ENCODE measurements at regions of chr14 and their contacts with region 1.

Region 1: GRCh38 chr14:65824285-65824977 is 411.9 kb downstream of the FUT8 start:
- DNase-seq: peak; percentile 29 to 82 (median 42)
- ATAC-seq: peak; percentile 97
- H3K4me3 ChIP-seq: no peak overlapping the region
- H3K4me3 Mint-ChIP-seq: no peak overlapping the region
- H3K27ac ChIP-seq: no peak overlapping the region
- H3K27ac Mint-ChIP-seq: no peak overlapping the region
- H3K4me1 ChIP-seq: peaks cover 3% of the 10 kb centered on the region
- H3K4me1 Mint-ChIP-seq: peaks cover 13% of the 10 kb centered on the region
- H3K27me3 ChIP-seq: no peaks in the 10 kb centered on the region
- H3K27me3 Mint-ChIP-seq: no peaks in the 10 kb centered on the region
- CTCF ChIP-seq: peak; percentile 93

Region 2: DNA sequence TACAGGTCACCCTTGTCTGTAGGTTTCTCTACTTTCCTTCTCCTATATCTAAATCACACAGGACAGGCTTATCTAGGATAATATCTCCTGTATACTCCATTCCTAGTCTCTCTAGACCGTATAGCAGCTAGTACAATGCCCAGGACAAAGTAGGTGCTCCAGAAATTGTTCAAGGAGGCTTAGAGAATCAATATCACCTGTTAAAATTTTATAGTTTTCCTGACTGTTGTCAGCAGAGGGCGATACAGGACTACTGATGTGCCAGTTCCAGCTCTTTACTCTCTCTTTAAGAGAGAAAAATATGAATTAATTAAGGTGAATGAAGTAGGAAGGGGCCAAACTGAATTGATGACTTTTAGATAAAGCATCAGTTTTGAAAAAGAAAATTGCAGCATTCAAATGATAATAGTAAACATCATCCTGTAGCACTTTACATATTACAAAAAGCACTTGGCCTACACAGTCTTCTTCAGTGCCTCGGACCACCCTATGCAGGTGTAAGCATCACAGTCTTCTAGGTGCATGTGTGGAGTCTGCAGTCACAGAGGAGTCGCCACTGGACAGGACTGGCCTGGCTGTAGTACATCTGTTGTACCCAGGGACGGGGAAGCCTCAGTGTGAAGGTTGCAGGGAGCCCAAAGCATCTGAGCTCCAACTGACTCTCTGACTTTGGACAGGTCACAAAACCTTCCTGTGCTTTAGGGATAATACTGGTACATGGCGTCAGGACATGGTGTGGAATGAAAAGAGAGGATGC is 660.2 kb before region 1 on chr14:
- CTCF ChIA-PET with region 1: interaction called, 17 read pairs
- POLR2A ChIA-PET with region 1: no interaction called
- intact Hi-C with region 1: loop called (anchors 2 kb)
- DNase-seq: peak in 13 of 14 experiments; percentile 4 to 79 (median 21)
- ATAC-seq: peak; percentile 54
- H3K4me3 ChIP-seq: no peak overlapping the region
- H3K4me3 Mint-ChIP-seq: no peak overlapping the region
- H3K27ac ChIP-seq: no peak overlapping the region
- H3K27ac Mint-ChIP-seq: no peak overlapping the region
- H3K4me1 ChIP-seq: no peaks in the 10 kb centered on the region
- H3K4me1 Mint-ChIP-seq: peaks cover 5% of the 10 kb centered on the region
- H3K27me3 ChIP-seq: no peaks in the 10 kb centered on the region
- H3K27me3 Mint-ChIP-seq: no peaks in the 10 kb centered on the region
- CTCF ChIP-seq: peak; percentile 93

Region 3: DNA sequence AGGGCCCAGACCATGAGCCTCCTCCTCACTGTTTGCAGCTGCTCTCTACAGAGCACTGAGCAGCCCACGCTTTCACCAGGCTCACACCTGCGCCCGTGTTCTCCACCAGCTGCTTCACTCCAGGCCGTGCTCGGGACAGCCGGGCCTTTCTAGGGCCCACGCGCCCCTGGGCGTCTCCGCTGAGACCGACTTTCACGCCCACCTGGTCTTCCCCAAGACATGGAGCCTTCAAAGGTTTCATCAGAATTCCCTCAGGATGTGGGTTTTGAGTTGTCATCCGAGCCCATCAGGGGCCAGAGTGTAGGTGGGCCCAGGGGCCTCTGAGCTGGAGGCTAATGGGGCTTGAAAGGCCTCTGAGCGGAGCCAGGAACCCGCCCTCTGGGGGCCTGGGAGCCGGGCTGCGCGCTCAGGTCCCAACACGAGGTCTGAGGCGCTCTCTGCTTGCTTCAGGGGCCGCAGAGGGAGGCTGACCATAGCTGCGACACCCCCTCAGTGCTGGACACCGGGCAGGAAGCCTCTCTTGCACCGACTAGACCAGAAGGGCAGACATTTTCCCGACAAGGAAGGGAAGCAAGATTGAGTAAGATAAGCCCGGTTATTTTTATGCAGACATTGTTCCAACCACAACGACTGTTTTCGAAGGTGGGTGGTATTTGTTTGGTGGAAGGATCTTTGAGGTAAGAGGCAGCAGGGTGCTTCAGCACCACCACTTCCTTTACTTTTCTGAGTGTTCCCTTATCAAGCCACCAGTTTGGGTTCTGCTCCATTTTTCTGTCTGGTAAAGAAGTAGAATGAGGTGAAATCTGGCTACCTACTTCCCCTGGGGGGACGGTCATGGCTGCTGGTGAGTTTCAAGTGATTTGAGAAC is 536.9 kb before region 1 on chr14:
- CTCF ChIA-PET with region 1: no interaction called
- POLR2A ChIA-PET with region 1: no interaction called
- intact Hi-C with region 1: loop called in 1 of 2 experiments (anchors 10 kb)
- DNase-seq: peak; percentile 21 to 83 (median 34)
- ATAC-seq: peak; percentile 86
- H3K4me3 ChIP-seq: peak overlapping the region; percentile 24
- H3K4me3 Mint-ChIP-seq: peak overlapping the region; percentile 85
- H3K27ac ChIP-seq: peak overlapping the region; percentile 72 to 73
- H3K27ac Mint-ChIP-seq: peak overlapping the region; percentile 95
- H3K4me1 ChIP-seq: peaks cover 68% of the 10 kb centered on the region
- H3K4me1 Mint-ChIP-seq: peaks cover 70% of the 10 kb centered on the region
- H3K27me3 ChIP-seq: no peaks in the 10 kb centered on the region
- H3K27me3 Mint-ChIP-seq: no peaks in the 10 kb centered on the region
- CTCF ChIP-seq: no peak

Region 4: GRCh38 chr14:65810322-65810721 is 14.1 kb before region 1 on chr14:
- CTCF ChIA-PET with region 1: interaction called, 15 read pairs
- POLR2A ChIA-PET with region 1: no interaction called
- intact Hi-C with region 1: no loop called
- DNase-seq: no peak
- ATAC-seq: no peak
- H3K4me3 ChIP-seq: no peak overlapping the region
- H3K4me3 Mint-ChIP-seq: no peak overlapping the region
- H3K27ac ChIP-seq: no peak overlapping the region
- H3K27ac Mint-ChIP-seq: no peak overlapping the region
- H3K4me1 ChIP-seq: no peaks in the 10 kb centered on the region
- H3K4me1 Mint-ChIP-seq: peaks cover 5% of the 10 kb centered on the region
- H3K27me3 ChIP-seq: no peaks in the 10 kb centered on the region
- H3K27me3 Mint-ChIP-seq: no peaks in the 10 kb centered on the region
- CTCF ChIP-seq: no peak

Region 5: DNA sequence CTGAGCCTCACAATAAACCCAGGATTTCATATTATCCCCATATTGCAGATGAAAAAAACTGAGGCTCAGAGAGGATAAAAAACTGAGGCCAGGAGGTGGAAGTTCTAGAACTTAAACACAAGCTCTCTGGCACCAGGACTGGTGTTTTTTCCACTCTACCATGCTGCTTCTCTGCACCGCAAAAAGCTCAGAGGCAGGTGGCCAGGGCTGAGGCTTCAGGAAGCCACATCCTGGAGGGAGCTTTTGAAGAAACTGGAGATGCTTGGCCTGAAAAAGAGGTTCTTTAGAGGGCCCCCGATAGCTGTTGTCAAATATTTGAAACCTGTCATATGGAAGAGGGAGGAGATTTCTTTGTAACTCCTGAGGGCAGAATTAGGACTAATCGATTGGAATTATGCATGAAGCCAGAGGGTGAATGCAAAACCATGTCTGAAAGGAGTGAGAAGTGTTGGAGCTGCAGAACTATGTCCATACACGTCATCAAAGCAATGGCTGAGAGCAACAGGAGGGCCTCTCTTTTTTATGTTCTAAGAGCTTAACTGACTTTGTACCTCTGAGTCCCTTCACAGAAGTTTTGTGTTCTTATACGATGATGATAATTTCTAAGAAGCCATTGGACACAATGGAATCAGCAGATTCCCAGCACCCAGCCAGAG is 36.7 kb after region 1 on chr14:
- CTCF ChIA-PET with region 1: interaction called, 11 read pairs
- POLR2A ChIA-PET with region 1: interaction called, 10 read pairs
- intact Hi-C with region 1: no loop called
- DNase-seq: peak in 8 of 14 experiments; percentile 16 to 74 (median 31)
- ATAC-seq: peak; percentile 70
- H3K4me3 ChIP-seq: no peak overlapping the region
- H3K4me3 Mint-ChIP-seq: peak overlapping the region; percentile 40
- H3K27ac ChIP-seq: no peak overlapping the region
- H3K27ac Mint-ChIP-seq: peak overlapping the region; percentile 36
- H3K4me1 ChIP-seq: peaks cover 51% of the 10 kb centered on the region
- H3K4me1 Mint-ChIP-seq: peaks cover 66% of the 10 kb centered on the region
- H3K27me3 ChIP-seq: no peaks in the 10 kb centered on the region
- H3K27me3 Mint-ChIP-seq: no peaks in the 10 kb centered on the region
- CTCF ChIP-seq: no peak

Measured in CD4-positive, alpha-beta T cell (primary cell).